Common myeloid progenitor, CD34-positive (primary cell): ENCODE measurements at regions of chr4 and their contacts with region 1.

Region 1: GRCh38 chr4:78592104-78592783 is 40.7 kb downstream of the ANXA3 start:
- DNase-seq: peak; percentile 36 to 56 (median 52)
- H3K4me3 ChIP-seq: no peak overlapping the region
- H3K27ac ChIP-seq: no peak overlapping the region
- H3K4me1 ChIP-seq: no peaks in the 10 kb centered on the region
- H3K27me3 ChIP-seq: no peaks in the 10 kb centered on the region

Region 2: GRCh38 chr4:78581618-78582017 is 10.6 kb before region 1 on chr4:
- CTCF ChIA-PET with region 1: interaction called, 10 read pairs
- POLR2A ChIA-PET with region 1: no interaction called
- DNase-seq: no peak
- H3K4me3 ChIP-seq: no peak overlapping the region
- H3K27ac ChIP-seq: no peak overlapping the region
- H3K4me1 ChIP-seq: no peaks in the 10 kb centered on the region
- H3K27me3 ChIP-seq: no peaks in the 10 kb centered on the region